BJ (cell line): ENCODE measurements at regions of chr1 and their contacts with region 1.

Region 1: DNA sequence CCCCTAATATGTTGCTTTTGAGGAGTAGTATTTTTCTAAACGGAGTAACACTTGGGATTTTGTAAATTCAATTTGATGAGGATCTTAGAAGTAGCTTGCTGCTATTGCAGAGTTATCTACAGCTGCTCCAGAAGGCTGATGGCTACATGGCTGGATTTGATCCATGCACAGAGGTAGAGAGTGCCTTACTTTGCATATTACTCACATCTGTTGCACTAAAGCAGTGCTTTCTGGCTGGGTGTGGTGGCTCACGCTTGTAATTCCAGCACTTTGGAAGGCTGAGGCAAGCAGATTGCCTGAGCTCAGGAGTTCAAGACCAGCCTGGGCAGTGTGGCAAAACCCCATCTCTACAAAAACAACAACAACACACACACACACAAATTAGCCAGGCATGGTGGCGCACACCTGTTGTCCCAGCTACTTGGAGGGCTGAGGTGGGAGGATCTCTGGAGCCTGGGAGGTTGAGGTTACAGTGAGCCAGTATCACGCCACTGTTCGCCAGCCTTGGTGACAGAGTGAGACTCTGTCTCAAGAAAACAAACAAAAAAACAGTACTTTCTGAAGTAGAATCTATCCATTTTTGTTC is 24.6 kb downstream of the RALGPS2 start:
- DNase-seq: no peak
- H3K4me3 ChIP-seq: no peak overlapping the region
- H3K27me3 ChIP-seq: no peaks in the 10 kb centered on the region
- CTCF ChIP-seq: no peak

Region 2: GRCh38 chr1:178542560-178543356 is 206.9 kb before region 1 on chr1:
- CTCF ChIA-PET with region 1: interaction called, 62 read pairs
- POLR2A ChIA-PET with region 1: interaction called, 3 read pairs
- DNase-seq: peak; percentile 28
- H3K4me3 ChIP-seq: peak overlapping the region; percentile 62
- H3K27me3 ChIP-seq: no peaks in the 10 kb centered on the region
- CTCF ChIP-seq: peak; percentile 81